ENCODE measurements at regions of chr15 and their contacts with region 1.

Region 1: DNA sequence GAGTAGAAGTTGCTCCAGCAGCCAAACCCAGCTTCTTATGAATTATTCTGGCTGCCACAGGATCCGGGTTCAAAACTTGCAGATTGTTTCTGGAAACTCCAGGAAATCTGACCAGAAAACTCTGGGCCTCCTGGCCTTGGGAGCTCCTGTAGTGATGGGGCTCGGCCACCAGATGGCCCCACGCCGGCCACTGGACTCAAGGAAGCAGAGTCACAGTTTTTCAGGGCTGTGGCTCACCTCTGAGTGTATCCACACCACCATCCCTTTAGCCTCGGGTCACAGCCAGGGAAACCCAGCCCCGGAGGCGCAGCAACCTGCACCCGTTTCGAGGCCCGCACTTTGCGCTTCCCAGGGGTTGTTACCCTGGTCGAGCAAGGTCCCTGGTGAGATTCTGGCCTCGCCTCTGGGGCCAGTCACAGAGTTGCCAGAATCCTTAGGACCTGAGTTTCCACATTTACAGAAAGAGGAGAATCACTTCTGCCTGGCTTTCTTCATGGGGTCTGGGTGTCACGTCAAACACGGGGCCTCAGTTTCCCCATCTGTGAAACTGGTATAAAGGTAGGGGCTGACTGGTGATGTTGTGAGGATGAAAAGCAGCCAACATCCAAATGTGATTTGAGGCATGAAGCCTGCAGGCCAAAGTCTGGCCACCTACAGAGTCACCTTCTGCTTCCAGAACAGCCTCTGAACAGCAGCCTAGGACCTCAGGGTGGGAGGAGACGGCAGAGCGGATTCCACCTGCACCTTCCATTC is 53.5 kb upstream of the LCTL start:
- DNase-seq: peak; percentile 26 to 61
- ATAC-seq: peak; percentile 56 to 88
- H3K4me3 ChIP-seq: no peak overlapping the region
- H3K27ac ChIP-seq: peak overlapping the region in 1 of 4 donors; percentile 40
- H3K4me1 ChIP-seq: peaks cover 4 to 8% of the 10 kb centered on the region in 2 donors
- H3K27me3 ChIP-seq: peaks cover 20 to 32% (median 20%) of the 10 kb centered on the region in 3 donors
- CTCF ChIP-seq: peak; percentile 69 to 92 (median 89)
- POLR2A ChIP-seq: no peak

Region 2: GRCh38 chr15:66700802-66701421 is 81.6 kb after region 1 on chr15:
- in situ Hi-C with region 1: no loop called
- intact Hi-C with region 1: loop called (anchors 1 kb)
- DNase-seq: peak; percentile 92 to 96
- ATAC-seq: peak; percentile 80 to 86
- H3K4me3 ChIP-seq: peak overlapping the region; percentile 62 to 93 (median 84)
- H3K27ac ChIP-seq: peak overlapping the region; percentile 66 to 87 (median 84)
- H3K4me1 ChIP-seq: peaks cover 6 to 12% of the 10 kb centered on the region in 2 donors
- H3K27me3 ChIP-seq: peaks cover 0 to 5% (median 0%) of the 10 kb centered on the region in 3 donors
- CTCF ChIP-seq: no peak
- POLR2A ChIP-seq: peak in 1 of 2 donors; percentile 21

Region 3: GRCh38 chr15:66774001-66774814 is 154.9 kb after region 1 on chr15:
- in situ Hi-C with region 1: loop called in 3 of 4 experiments (anchors 5 to 25 kb)
- intact Hi-C with region 1: loop called (anchors 1 kb)
- DNase-seq: peak; percentile 35 to 74
- ATAC-seq: peak; percentile 86 to 90
- H3K4me3 ChIP-seq: no peak overlapping the region
- H3K27ac ChIP-seq: peak overlapping the region in 1 of 4 donors; percentile 5
- H3K4me1 ChIP-seq: peaks cover 0 to 13% of the 10 kb centered on the region in 2 donors
- H3K27me3 ChIP-seq: no peaks in the 10 kb centered on the region
- CTCF ChIP-seq: peak; percentile 92 to 97 (median 96)
- POLR2A ChIP-seq: no peak

Region 4: DNA sequence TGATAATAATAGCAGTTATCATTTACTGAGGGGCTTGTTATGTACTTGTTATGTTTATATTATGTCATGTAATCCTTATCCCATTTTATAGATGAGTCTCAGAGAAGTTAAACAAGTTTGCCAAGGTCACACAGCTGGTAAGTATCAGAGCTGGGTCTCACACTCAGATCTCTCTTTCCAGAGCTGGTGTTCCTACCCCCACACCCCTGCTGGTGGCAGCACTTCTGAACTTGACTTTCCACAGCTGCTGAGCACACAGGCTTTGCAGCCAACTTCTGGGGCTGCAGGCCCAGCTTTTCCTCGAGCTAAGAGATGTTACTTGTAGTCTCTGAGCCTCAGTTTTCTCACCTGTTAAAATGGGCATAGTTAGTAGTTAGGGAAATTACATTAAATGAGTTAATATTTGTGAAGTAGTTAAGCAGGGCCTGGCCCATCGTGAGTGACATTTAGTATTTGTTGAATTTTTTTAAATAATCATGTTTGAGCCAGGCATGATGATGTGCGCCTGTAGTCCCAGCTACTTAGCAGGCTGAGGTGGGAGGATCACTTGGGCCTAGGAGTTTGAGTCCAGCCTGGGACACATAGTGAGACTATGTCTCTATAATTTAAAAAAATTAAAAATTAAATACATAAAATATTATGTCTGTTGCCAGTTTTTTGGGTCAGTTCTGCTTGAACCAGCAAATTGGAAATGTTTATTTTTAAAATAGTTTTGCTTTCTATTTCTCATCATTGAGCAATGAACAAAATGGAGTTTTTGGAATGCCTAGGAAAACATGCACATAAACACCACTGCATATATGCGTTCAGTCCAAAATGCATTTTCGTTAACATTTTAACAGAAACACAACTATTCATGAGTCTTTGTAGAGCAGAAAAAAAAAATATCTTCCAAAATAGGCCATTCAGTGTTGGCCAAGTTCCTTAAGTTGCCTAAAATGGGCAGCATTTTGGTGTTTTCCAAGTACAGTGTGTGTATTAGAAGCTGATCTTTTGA is 170.0 kb after region 1 on chr15:
- in situ Hi-C with region 1: loop called in 1 of 4 experiments (anchors 25 kb)
- intact Hi-C with region 1: no loop called
- DNase-seq: no peak
- ATAC-seq: no peak
- H3K4me3 ChIP-seq: no peak overlapping the region
- H3K27ac ChIP-seq: no peak overlapping the region
- H3K4me1 ChIP-seq: no peaks in the 10 kb centered on the region
- H3K27me3 ChIP-seq: no peaks in the 10 kb centered on the region
- CTCF ChIP-seq: no peak
- POLR2A ChIP-seq: no peak

Region 5: DNA sequence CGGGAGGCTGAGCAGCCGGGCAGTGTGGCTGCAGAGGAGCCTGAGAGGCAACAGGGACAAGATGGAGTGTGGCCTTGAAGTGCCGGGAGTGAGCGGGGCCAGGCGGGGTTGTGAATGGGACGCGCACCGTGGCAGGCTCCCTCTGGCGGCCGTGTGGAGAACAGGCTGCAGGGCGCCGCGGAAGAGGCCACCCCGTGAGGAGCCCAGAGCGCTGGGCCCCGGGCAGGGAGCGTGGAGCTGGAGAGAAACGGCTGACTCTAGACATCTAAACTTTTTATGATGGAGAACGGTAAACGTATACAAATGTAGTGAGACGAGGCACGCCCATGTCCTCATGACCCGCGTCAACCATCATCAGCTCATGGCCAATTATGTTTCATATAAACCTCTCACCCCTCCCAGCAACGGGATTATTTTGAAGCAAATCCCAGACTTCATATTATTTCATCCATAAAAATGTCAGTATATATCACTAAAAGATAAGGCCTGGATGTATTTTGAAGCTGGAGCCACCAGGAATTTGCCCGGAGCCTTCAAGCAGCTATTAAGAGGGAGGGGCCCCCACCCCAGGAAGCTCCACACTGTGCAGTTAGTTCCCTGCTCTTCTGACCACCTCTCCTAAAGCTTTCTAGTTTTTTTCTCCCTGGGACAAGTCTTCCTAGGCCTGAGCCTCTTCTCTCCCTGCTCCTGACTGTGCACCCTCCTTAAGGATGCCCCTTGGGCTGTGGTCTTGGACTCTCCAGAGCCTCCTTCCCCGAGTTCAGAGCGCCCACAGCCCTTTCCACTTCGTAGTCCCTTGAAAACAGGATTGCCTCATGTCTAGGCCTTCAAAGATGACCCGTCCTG is 232.1 kb after region 1 on chr15:
- in situ Hi-C with region 1: loop called in 1 of 4 experiments (anchors 10 kb)
- intact Hi-C with region 1: loop called (anchors 5 kb)
- DNase-seq: peak; percentile 59 to 61
- ATAC-seq: peak; percentile 85 to 94
- H3K4me3 ChIP-seq: no peak overlapping the region
- H3K27ac ChIP-seq: peak overlapping the region in 1 of 4 donors; percentile 43
- H3K4me1 ChIP-seq: peaks cover 0 to 11% of the 10 kb centered on the region in 2 donors
- H3K27me3 ChIP-seq: no peaks in the 10 kb centered on the region
- CTCF ChIP-seq: peak; percentile 75 to 96 (median 90)
- POLR2A ChIP-seq: no peak

Measured in gastrocnemius medialis (tissue), 4 donors.